Ovary (tissue), 10 donors: ENCODE measurements at regions of chr7 and their contacts with region 1.

Region 1: DNA sequence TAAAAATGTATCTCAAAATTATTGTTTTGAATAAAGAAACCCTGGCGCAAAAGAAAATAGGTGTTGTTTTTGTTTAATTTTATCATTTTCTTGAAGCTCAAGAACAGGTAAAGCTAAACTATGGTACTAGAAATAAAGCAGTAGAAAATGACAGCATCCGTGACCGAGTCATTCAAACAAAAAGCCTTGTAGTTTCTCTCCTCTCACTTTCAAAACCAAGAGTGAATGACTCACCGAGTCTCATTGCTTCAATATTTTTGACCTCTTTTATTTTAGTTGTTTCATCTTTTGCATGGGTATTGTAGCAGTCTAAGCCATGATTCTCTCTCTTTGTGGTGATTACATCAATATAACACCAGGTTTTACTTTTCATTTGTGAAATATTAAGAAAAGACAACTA is 396.5 kb downstream of the POM121L12 start:
- DNase-seq: no peak
- H3K4me3 ChIP-seq: no peak overlapping the region
- H3K27ac ChIP-seq: no peak overlapping the region
- H3K4me1 ChIP-seq: no peaks in the 10 kb centered on the region
- H3K27me3 ChIP-seq: no peaks in the 10 kb centered on the region
- CTCF ChIP-seq: no peak
- EP300 ChIP-seq: no peak
- POLR2A ChIP-seq: no peak

Region 2: GRCh38 chr7:52233248-52233647 is 1198.7 kb before region 1 on chr7:
- intact Hi-C with region 1: loop called in 1 of 4 experiments (anchors 5 kb)
- DNase-seq: no peak
- H3K4me3 ChIP-seq: no peak overlapping the region
- H3K27ac ChIP-seq: no peak overlapping the region
- H3K4me1 ChIP-seq: no peaks in the 10 kb centered on the region
- H3K27me3 ChIP-seq: no peaks in the 10 kb centered on the region
- CTCF ChIP-seq: no peak
- EP300 ChIP-seq: no peak
- POLR2A ChIP-seq: no peak

Region 3: GRCh38 chr7:53397911-53398310 is 34.0 kb before region 1 on chr7:
- intact Hi-C with region 1: no loop called
- DNase-seq: no peak
- H3K4me3 ChIP-seq: no peak overlapping the region
- H3K27ac ChIP-seq: no peak overlapping the region
- H3K4me1 ChIP-seq: no peaks in the 10 kb centered on the region
- H3K27me3 ChIP-seq: no peaks in the 10 kb centered on the region
- CTCF ChIP-seq: no peak
- EP300 ChIP-seq: no peak
- POLR2A ChIP-seq: no peak